H1 (cell line): ENCODE measurements at regions of chr10 and their contacts with region 1.

Region 1: GRCh38 chr10:60140651-60141632 is 234.6 kb upstream of the CCDC6 start:
- DNase-seq: peak in 1 of 2 experiments; percentile 60
- H3K4me3 ChIP-seq: peak overlapping the region; percentile 52 to 82 (median 68)
- H3K27ac ChIP-seq: peak overlapping the region; percentile 81
- H3K4me1 ChIP-seq: peaks cover 0 to 10% (median 4%) of the 10 kb centered on the region in 4 experiments; a peak in 2 of 7 replicates
- H3K27me3 ChIP-seq: no peaks in the 10 kb centered on the region
- CTCF ChIP-seq: no peak
- EP300 ChIP-seq: no peak
- POLR2A ChIP-seq: peak in 1 of 2 experiments; percentile 51; a peak in 1 of 3 replicates
- RAD21 ChIP-seq: no peak

Region 2: GRCh38 chr10:60130130-60130579 is 10.8 kb before region 1 on chr10:
- CTCF ChIA-PET with region 1: interaction called, 5 read pairs
- POLR2A ChIA-PET with region 1: interaction called, 23 read pairs
- DNase-seq: no peak
- H3K4me3 ChIP-seq: no peak overlapping the region
- H3K27ac ChIP-seq: no peak overlapping the region
- H3K4me1 ChIP-seq: peaks cover 0 to 5% (median 0%) of the 10 kb centered on the region in 4 experiments; a peak in 2 of 7 replicates
- H3K27me3 ChIP-seq: no peaks in the 10 kb centered on the region
- CTCF ChIP-seq: no peak
- EP300 ChIP-seq: no peak
- POLR2A ChIP-seq: no peak
- RAD21 ChIP-seq: no peak

Region 3: DNA sequence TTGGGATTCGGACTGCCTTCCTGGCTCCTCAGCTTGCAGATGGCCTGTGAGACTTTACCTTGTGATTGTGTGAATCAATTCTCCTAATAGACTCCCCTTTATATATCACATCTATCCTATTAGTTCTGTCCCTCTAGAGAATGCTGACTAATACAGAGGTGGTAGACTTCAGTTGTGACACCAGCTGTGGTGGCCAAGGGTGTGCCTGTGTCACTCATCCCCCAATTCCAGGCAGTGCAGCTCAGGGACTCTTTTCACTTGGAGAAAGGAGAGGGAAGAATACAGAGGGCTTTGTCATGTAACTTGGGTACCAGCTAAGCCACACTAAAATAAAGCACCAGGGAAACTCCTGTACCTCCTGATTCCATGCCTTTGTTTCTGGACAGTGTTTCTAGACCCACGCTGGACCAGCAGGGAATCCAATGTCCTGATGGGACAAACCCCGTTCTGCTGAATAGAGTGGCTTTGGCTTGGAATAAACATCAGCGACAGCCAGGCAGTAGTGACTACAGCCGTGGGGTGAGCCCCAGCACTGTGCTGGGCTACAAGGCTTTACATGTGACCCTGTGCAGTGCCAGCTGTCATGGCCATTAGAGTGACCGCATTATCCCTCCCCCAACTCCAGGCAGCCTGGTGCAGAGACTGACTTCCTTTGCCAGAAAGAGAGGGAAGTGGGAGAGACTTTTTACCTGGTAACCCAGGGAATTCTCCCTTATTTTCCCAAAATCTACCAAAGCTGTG is 15.2 kb after region 1 on chr10:
- CTCF ChIA-PET with region 1: interaction called, 6 read pairs
- POLR2A ChIA-PET with region 1: interaction called, 13 read pairs
- DNase-seq: no peak
- H3K4me3 ChIP-seq: no peak overlapping the region
- H3K27ac ChIP-seq: no peak overlapping the region
- H3K4me1 ChIP-seq: no peaks in the 10 kb centered on the region
- H3K27me3 ChIP-seq: no peaks in the 10 kb centered on the region
- CTCF ChIP-seq: no peak
- EP300 ChIP-seq: no peak
- POLR2A ChIP-seq: no peak
- RAD21 ChIP-seq: no peak